ENCODE measurements at regions of chr9 and their contacts with region 1.

Region 1: DNA sequence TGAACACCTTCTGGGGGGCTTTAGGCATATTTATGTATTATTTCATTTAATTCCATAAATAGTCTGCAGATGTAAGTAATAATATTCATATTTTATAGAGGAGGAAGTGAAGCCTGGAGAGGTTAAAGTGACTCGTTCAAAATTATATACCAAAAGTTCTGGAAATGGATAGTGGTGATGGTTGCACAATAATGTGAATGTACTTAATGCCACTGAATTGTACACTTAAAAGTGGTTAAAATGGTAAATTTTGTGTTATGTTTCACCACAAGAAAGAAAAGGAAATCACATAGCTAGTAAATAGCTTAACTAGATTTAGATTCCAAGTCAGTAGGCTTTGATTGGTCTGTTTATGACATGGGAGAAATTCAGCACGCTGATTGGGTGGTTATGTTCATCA is 13.0 kb upstream of the TMEFF1 start:
- DNase-seq: no peak
- ATAC-seq: no peak
- H3K4me3 ChIP-seq: no peak overlapping the region
- H3K27ac ChIP-seq: no peak overlapping the region
- H3K4me1 ChIP-seq: peaks cover 0 to 12% (median 2%) of the 10 kb centered on the region in 9 donors
- H3K27me3 ChIP-seq: no peaks in the 10 kb centered on the region
- CTCF ChIP-seq: no peak

Region 2: GRCh38 chr9:99726758-99727157 is 733.2 kb before region 1 on chr9:
- intact Hi-C with region 1: loop called in 1 of 10 experiments (anchors 5 kb)
- DNase-seq: peak in 1 of 2 donors; percentile 9
- ATAC-seq: peak in 6 of 8 donors; percentile 45 to 74 (median 58)
- H3K4me3 ChIP-seq: no peak overlapping the region
- H3K27ac ChIP-seq: no peak overlapping the region
- H3K4me1 ChIP-seq: peaks cover 0 to 19% (median under 1%) of the 10 kb centered on the region in 9 donors
- H3K27me3 ChIP-seq: no peaks in the 10 kb centered on the region
- CTCF ChIP-seq: no peak

Measured in heart right ventricle (tissue), 16 donors.